ENCODE measurements at regions of chr20 and their contacts with region 1.

Region 1: DNA sequence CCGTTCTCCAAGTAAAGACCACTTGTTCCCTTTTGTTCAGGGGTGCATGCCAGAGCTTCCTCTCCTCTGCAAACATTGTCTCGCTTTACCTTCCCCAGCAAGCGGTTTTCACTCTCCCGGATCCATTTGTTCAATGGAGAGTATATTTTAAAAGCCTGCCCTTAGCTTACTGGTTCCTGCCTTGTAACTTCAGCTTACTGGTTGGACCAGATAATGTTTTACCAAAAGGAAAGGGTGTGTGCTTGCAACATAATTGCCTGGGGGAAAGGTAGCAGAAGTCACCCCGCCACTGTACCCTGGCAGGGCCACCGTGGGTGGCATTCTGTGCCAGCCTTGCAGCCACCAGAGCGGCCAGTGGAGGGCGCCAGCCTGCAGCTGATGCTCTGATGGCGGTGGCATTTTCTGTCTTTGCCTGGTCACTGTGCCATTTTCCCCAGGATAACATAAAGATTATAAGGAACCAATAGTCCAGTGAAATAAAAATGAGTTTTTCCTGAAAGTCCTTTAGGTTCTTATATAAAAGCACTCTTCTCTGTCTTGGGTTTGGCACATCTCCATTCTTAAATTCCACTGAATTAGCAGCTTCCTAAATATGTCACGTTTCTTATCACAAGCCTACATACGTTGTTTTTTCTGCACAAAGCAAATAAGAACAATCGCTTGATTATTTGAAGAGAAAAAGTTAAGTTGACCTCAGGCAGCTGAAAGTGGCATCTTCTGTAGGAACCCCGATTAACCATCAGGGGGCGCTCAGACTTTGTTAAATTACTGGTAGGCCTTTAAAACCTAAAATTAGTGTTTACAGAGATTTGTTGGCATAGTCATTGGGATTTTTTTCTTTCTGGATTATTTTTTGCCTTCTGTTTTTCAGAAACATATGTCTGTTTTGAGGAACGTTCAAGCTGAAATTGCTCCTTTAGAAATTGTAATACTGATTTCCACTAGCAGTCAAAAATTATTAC is 67.4 kb upstream of the XRN2 start:
- DNase-seq: peak; percentile 41
- ATAC-seq: peak; percentile 88
- H3K4me3 ChIP-seq: no peak overlapping the region
- H3K27ac ChIP-seq: no peak overlapping the region
- H3K4me1 ChIP-seq: 0 out of 2 replicates have a peak, but pooled peaks cover 2% of the 10 kb centered on the region
- H3K27me3 ChIP-seq: no peaks in the 10 kb centered on the region
- CTCF ChIP-seq: peak; percentile 98

Region 2: GRCh38 chr20:20860078-20860806 is 375.5 kb before region 1 on chr20:
- CTCF ChIA-PET with region 1: no interaction called
- POLR2A ChIA-PET with region 1: no interaction called
- in situ Hi-C with region 1: no loop called
- intact Hi-C with region 1: loop called (anchors 10 kb)
- DNase-seq: peak; percentile 54
- ATAC-seq: peak; percentile 88
- H3K4me3 ChIP-seq: no peak overlapping the region
- H3K27ac ChIP-seq: no peak overlapping the region
- H3K4me1 ChIP-seq: no peaks in the 10 kb centered on the region
- H3K27me3 ChIP-seq: no peaks in the 10 kb centered on the region
- CTCF ChIP-seq: peak; percentile 94

Region 3: GRCh38 chr20:21505161-21505809 is 269.5 kb after region 1 on chr20:
- CTCF ChIA-PET with region 1: interaction called, 4 read pairs
- POLR2A ChIA-PET with region 1: no interaction called
- in situ Hi-C with region 1: no loop called
- intact Hi-C with region 1: loop called (anchors 5 kb)
- DNase-seq: peak; percentile 10
- ATAC-seq: peak; percentile 75
- H3K4me3 ChIP-seq: no peak overlapping the region
- H3K27ac ChIP-seq: no peak overlapping the region
- H3K4me1 ChIP-seq: no peaks in the 10 kb centered on the region
- H3K27me3 ChIP-seq: no peaks in the 10 kb centered on the region
- CTCF ChIP-seq: peak; percentile 92

Region 4: DNA sequence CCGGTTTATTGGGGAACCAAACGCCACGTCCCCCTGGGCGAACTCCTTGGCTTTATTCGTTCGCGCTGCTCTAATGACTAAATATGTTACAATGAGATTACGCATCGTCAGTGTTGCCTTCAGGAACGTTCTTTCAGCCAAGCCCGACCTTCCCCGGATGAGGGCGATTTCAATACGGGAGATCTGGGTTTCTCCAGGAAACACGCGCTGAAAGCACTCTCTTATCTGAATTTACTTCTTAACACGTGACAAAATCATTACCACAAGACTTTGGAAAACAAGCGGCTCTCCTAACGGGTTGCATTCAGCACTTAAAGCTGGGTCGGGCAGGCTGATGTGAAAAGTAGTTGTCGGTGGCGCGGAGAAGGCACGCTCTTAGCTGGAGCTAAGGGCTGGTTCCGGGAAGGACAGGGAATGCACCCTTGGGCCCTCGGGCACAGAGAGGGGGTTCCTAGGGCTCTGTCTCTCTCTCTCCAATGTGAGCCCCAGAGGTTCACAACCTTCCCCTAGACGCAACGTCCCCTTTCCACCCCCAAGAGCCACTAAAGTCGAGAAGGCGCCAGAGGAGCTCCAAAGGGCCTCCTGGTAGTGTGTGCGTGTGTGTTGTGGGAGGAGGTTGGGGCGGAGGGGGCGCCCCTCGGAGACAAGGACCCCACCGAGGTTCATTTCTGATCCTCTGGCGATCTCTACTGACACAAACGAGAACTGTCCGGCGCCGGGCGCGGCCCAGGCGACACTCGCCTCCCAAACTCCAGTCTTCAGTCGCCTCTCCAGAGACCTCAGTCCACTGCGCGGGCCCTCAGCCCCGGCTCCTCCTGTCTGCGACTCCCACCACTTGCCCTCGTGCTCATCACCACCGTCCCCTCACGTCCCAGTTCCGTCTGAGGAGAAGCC is 285.2 kb after region 1 on chr20:
- CTCF ChIA-PET with region 1: interaction called, 10 read pairs
- POLR2A ChIA-PET with region 1: no interaction called
- in situ Hi-C with region 1: no loop called
- intact Hi-C with region 1: no loop called
- DNase-seq: no peak
- ATAC-seq: peak; percentile 72
- H3K4me3 ChIP-seq: peak overlapping the region in 1 of 2 experiments; percentile 11; a peak in 1 of 4 replicates
- H3K27ac ChIP-seq: no peak overlapping the region
- H3K4me1 ChIP-seq: no peaks in the 10 kb centered on the region
- H3K27me3 ChIP-seq: peaks cover 25% of the 10 kb centered on the region
- CTCF ChIP-seq: no peak; the same call in 1 of the 2 replicates

Region 5: DNA sequence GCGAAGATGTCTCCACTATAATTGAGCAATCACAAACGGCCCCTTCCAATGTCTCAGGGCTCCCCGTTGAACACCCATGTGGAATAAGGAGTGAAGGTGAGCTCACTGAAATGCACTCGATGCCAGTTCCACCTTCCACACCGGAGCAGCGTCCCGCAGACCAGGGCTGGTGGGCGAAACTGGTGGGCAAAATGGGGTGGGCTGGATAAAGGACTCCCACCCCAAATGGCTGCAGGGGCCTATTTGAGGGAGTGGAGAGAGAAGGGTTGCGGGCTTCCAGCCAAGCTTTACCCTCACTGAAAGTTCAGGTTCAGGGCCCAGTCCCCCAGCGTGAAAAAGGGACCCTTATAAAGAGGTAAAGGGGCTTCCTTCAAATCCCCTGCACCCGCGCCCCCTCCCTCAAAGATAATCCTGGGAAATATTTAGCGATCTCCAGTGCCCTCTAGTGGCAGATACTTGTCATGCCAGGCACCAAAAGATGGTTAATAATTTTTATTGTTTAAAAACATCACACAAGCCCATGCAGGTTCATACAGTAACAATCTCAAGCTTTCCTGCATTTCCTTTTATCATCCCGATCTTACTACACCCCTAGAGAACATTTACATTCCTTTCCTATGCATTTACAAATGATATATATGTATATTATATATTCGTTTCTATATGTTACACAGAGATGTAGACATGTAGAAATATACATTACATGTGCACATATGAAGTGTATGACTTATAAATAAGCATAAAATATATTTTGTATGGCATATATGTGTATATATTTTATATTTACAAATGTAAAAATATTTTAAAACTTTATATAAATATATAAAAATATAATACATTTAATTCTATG is 336.3 kb after region 1 on chr20:
- CTCF ChIA-PET with region 1: no interaction called
- POLR2A ChIA-PET with region 1: no interaction called
- in situ Hi-C with region 1: no loop called
- intact Hi-C with region 1: loop called (anchors 5 kb)
- DNase-seq: peak; percentile 10
- ATAC-seq: no peak; the same call in 1 of the 2 replicates
- H3K4me3 ChIP-seq: no peak overlapping the region
- H3K27ac ChIP-seq: no peak overlapping the region
- H3K4me1 ChIP-seq: no peaks in the 10 kb centered on the region
- H3K27me3 ChIP-seq: 0 out of 2 replicates have a peak, but pooled peaks cover 2% of the 10 kb centered on the region
- CTCF ChIP-seq: peak; percentile 90

Region 6: GRCh38 chr20:21615617-21616080 is 379.9 kb after region 1 on chr20:
- CTCF ChIA-PET with region 1: interaction called, 4 read pairs
- POLR2A ChIA-PET with region 1: no interaction called
- in situ Hi-C with region 1: no loop called
- intact Hi-C with region 1: loop called (anchors 5 kb)
- DNase-seq: peak; percentile 42
- ATAC-seq: peak; percentile 97
- H3K4me3 ChIP-seq: no peak overlapping the region
- H3K27ac ChIP-seq: no peak overlapping the region
- H3K4me1 ChIP-seq: no peaks in the 10 kb centered on the region
- H3K27me3 ChIP-seq: no peaks in the 10 kb centered on the region; the same call in none of the 2 replicates
- CTCF ChIP-seq: peak; percentile 91